Activated naive CD8-positive, alpha-beta T cell treated with anti-CD3 and anti-CD28 coated beads, Interleukin-2, amount 10 ng/mL, durations not matched to agents 7 days and 5 days (primary cell): ENCODE measurements at regions of chr5 and their contacts with region 1.

Region 1: GRCh38 chr5:119070828-119071572 is at the start of gene DMXL1:
- DNase-seq: peak; percentile 95
- ATAC-seq: peak; percentile 86
- H3K4me3 Mint-ChIP-seq: peak within 1 kb of the TSS; percentile 100
- H3K27ac Mint-ChIP-seq: peak within 1 kb of the TSS; percentile 100
- H3K4me1 Mint-ChIP-seq: peaks cover 25% of the 10 kb centered on the region
- H3K27me3 Mint-ChIP-seq: no peaks in the 10 kb centered on the region
- total RNA-seq, gene DMXL1: 35.5 to 40.7 TPM

Region 2: GRCh38 chr5:119031905-119032304 is 39.1 kb before region 1 on chr5:
- POLR2A ChIA-PET with region 1: interaction called, 11 read pairs
- DNase-seq: no peak
- ATAC-seq: no peak
- H3K4me3 Mint-ChIP-seq: peak overlapping the region; percentile 49
- H3K27ac Mint-ChIP-seq: peak overlapping the region; percentile 80
- H3K4me1 Mint-ChIP-seq: peaks cover 17% of the 10 kb centered on the region
- H3K27me3 Mint-ChIP-seq: no peaks in the 10 kb centered on the region